Aorta (tissue), 5 donors: ENCODE measurements at regions of chr15 and their contacts with region 1.

Region 1: GRCh38 chr15:96330450-96331145 is at the start of gene NR2F2:
- DNase-seq: peak; percentile 96 to 97
- ATAC-seq: peak; percentile 88
- H3K4me3 ChIP-seq: peak within 1 kb of the TSS; percentile 89 to 98
- H3K27ac ChIP-seq: peak within 1 kb of the TSS; percentile 20 to 98
- H3K4me1 ChIP-seq: no peaks in the 10 kb centered on the region
- H3K27me3 ChIP-seq: no peaks in the 10 kb centered on the region
- total RNA-seq, gene NR2F2: 102 to 132 TPM

Region 2: GRCh38 chr15:95169541-95170459 is 1160.8 kb before region 1 on chr15:
- intact Hi-C with region 1: loop called in 1 of 2 experiments (anchors 10 kb)
- DNase-seq: peak; percentile 45 to 65
- ATAC-seq: peak; percentile 67
- H3K4me3 ChIP-seq: no peak overlapping the region
- H3K27ac ChIP-seq: no peak overlapping the region
- H3K4me1 ChIP-seq: peaks cover 0 to 2% of the 10 kb centered on the region in 2 donors
- H3K27me3 ChIP-seq: no peaks in the 10 kb centered on the region

Region 3: DNA sequence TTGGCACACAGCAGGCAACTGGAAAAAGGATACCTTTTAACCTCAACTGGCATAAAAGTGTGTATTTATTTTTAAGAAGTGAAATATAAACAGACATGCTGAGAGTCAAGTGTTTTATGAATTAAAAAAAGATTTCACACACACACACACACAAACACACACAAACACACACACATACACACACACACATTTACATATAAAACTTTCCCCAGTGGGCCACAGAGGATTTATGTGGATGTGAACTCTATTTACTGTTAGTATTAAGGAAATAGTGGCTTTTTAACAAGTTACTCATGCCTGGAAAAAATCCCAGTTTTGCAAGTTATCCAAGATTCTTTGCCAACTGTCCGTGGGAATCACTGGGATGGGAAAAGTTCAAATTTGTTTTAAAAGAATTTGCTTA is 726.0 kb before region 1 on chr15:
- intact Hi-C with region 1: loop called in 1 of 2 experiments (anchors 5 kb)
- DNase-seq: no peak
- ATAC-seq: peak; percentile 77
- H3K4me3 ChIP-seq: no peak overlapping the region
- H3K27ac ChIP-seq: no peak overlapping the region
- H3K4me1 ChIP-seq: peaks cover 4% of the 10 kb centered on the region in 2 donors
- H3K27me3 ChIP-seq: no peaks in the 10 kb centered on the region

Region 4: DNA sequence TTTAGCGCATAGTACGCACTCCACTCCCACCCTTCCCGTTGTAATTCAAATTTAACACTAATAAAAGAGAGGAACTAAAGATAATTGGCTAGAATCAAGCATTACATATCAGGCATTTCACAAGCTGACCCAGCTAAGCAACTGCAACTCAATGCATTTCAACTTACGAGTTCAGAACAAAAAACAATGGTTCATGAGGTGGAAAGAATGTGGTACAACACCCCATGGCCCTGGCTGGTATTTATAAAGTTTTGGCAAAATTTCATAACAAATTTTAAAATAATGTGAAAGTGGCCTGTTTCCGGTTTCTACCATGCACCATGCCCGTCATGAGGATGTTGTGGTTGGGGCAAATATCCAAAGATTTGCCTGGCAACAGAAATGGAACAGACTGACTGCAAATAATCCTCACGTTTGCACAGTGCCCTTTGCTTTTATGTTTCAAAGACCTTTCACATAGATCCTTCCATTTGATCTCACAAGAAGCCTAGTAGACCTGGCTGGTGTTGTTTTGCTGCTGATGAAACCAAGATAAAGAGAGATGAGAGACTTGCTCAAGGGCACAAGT is 455.4 kb before region 1 on chr15:
- intact Hi-C with region 1: loop called in 1 of 2 experiments (anchors 10 kb)
- DNase-seq: peak in 1 of 2 donors; percentile 61
- ATAC-seq: peak; percentile 77
- H3K4me3 ChIP-seq: no peak overlapping the region
- H3K27ac ChIP-seq: peak overlapping the region; percentile 9 to 75
- H3K4me1 ChIP-seq: peaks cover 0 to 3% of the 10 kb centered on the region in 2 donors
- H3K27me3 ChIP-seq: no peaks in the 10 kb centered on the region

Region 5: DNA sequence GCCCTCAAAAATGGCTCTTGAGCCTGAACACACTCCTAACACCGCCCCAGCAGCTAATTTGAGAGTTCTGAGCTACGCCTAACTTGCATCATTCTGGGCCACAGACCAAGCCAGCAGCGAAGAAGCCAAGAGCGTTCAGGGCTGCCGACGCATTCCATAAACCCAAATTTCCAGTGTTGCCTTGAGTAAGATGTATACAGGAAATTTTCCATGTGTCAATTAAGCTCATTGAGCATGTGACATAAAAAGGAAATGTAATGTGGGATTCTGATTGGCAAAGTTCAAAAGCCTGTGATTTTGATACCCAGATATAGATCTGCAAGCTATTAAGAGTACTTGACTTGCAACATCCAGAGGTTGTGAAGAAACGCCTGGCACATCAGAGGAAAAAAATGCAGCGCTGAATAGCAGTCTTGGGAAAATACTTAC is 148.7 kb before region 1 on chr15:
- intact Hi-C with region 1: loop called in 1 of 2 experiments (anchors 10 kb)
- DNase-seq: peak; percentile 81 to 88
- ATAC-seq: peak; percentile 83
- H3K4me3 ChIP-seq: no peak overlapping the region
- H3K27ac ChIP-seq: peak overlapping the region in 1 of 2 donors; percentile 20
- H3K4me1 ChIP-seq: no peaks in the 10 kb centered on the region
- H3K27me3 ChIP-seq: no peaks in the 10 kb centered on the region

Region 6: DNA sequence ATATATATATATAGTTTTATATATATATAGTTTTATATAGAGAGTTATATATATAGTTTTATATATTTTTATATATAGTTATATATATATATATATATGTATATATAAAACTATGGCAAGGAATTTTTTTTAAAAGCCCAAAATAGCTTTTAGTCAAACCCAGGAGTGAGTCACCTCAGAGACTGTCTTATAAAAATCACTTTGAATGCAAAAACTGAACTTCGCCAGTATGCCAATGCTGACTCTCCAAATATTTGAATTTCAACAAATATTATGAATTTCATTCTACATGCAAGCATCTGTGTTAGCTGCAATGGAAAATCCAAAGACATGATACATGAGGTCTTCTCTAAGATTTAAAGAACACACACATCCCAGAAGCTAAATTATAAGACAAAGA is 132.9 kb before region 1 on chr15:
- intact Hi-C with region 1: no loop called
- DNase-seq: no peak
- ATAC-seq: no peak
- H3K4me3 ChIP-seq: no peak overlapping the region
- H3K27ac ChIP-seq: no peak overlapping the region
- H3K4me1 ChIP-seq: no peaks in the 10 kb centered on the region
- H3K27me3 ChIP-seq: no peaks in the 10 kb centered on the region